ENCODE measurements at regions of chr6 and their contacts with region 1.

Region 1: GRCh38 chr6:152338335-152339125 is 298.6 kb downstream of the SYNE1 start:
- DNase-seq: no peak
- H3K4me3 ChIP-seq: no peak overlapping the region
- H3K27me3 ChIP-seq: no peaks in the 10 kb centered on the region
- CTCF ChIP-seq: peak; percentile 91

Region 2: DNA sequence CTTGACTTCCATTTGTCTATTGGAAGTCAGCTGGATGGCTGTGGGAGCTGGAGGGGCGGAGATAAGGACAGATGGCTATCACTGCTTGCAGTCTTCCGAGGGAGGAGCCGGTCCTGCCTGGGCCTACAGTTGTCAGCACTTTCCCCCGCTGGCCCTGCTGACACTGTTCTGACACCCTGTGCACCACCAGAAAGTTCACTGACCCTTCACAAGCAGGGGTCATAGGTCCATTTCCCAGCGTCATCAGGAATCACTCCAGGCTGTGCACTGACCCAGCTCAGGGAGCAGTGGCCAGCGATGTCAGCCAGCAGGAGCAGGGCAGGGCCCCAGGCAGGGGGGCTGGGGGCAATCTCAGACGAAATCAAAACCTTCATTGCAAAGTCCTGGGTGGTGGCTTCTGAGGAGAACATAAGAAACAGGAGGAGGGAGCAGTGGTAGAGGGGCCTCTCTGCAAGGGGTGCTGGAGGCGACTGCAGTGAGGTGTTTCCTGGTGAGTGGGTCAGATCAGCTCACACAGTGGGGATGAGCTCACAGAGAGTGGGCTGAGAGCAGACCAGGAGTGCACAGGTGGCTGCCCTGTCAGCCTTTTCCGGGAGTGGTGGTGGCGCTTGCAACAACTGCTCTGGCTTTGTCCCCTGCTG is 1765.4 kb before region 1 on chr6:
- CTCF ChIA-PET with region 1: no interaction called
- POLR2A ChIA-PET with region 1: no interaction called
- DNase-seq: no peak
- H3K4me3 ChIP-seq: no peak overlapping the region
- H3K27me3 ChIP-seq: no peaks in the 10 kb centered on the region; the same call in 1 of the 2 replicates
- CTCF ChIP-seq: no peak

Region 3: GRCh38 chr6:152054441-152054840 is 284.1 kb before region 1 on chr6:
- CTCF ChIA-PET with region 1: no interaction called
- POLR2A ChIA-PET with region 1: no interaction called
- DNase-seq: peak; percentile 62
- H3K4me3 ChIP-seq: no peak overlapping the region
- H3K27me3 ChIP-seq: no peaks in the 10 kb centered on the region
- CTCF ChIP-seq: no peak

Region 4: DNA sequence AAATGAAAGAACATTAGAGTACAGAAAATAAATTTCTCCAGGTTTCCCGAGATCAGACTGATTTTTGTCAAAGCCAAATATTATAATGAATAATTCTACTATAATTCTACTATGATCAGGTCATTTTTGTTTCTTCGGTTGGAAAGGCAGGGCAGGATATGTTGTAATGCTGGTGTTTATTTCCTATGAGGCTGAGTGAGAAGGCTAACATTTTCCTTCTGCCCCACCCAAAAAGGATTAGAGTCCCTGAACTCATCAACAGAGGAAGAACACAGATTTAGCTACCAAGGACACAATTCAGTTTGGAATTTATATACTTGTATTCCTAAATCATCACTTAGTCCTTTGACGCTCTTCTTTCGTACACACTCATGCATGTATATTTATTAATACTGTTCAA is 20.3 kb before region 1 on chr6:
- CTCF ChIA-PET with region 1: interaction called, 22 read pairs
- POLR2A ChIA-PET with region 1: no interaction called
- DNase-seq: no peak
- H3K4me3 ChIP-seq: no peak overlapping the region
- H3K27me3 ChIP-seq: no peaks in the 10 kb centered on the region
- CTCF ChIP-seq: no peak

Region 5: DNA sequence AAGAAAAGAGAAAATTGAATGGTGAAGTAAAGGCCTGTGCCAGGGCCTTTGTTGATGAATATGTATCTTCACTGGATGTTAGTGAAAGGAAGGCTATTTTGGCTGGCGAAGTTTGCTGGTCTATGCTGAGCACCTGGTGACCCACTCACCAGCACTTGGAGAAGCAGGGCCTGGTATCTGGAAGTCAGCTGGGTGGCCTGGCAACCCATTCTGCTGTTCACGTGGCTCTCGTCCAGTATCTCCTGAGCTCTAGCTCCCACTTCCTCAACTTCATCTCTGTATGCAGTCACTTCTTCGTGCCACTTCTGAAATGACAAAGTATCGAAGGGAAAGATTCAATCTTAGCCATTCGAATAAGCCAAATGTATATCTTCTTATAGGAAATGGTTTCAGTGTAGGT is 14.9 kb after region 1 on chr6:
- CTCF ChIA-PET with region 1: interaction called, 10 read pairs
- POLR2A ChIA-PET with region 1: no interaction called
- DNase-seq: no peak
- H3K4me3 ChIP-seq: no peak overlapping the region
- H3K27me3 ChIP-seq: no peaks in the 10 kb centered on the region
- CTCF ChIP-seq: no peak

Region 6: GRCh38 chr6:152360034-152360433 is 21.5 kb after region 1 on chr6:
- CTCF ChIA-PET with region 1: interaction called, 16 read pairs
- POLR2A ChIA-PET with region 1: no interaction called
- DNase-seq: no peak
- H3K4me3 ChIP-seq: no peak overlapping the region
- H3K27me3 ChIP-seq: no peaks in the 10 kb centered on the region
- CTCF ChIP-seq: no peak